Heart left ventricle (tissue), 16 donors: ENCODE measurements at regions of chr5 and their contacts with region 1.

Region 1: GRCh38 chr5:55706230-55706629 is 5.9 kb downstream of the SLC38A9 start:
- DNase-seq: no peak
- ATAC-seq: no peak
- H3K4me3 ChIP-seq: no peak overlapping the region
- H3K27ac ChIP-seq: no peak overlapping the region
- H3K4me1 ChIP-seq: peaks cover 0 to 11% (median 3%) of the 10 kb centered on the region in 12 donors
- H3K27me3 ChIP-seq: no peaks in the 10 kb centered on the region
- CTCF ChIP-seq: no peak
- POLR2A ChIP-seq: no peak

Region 2: DNA sequence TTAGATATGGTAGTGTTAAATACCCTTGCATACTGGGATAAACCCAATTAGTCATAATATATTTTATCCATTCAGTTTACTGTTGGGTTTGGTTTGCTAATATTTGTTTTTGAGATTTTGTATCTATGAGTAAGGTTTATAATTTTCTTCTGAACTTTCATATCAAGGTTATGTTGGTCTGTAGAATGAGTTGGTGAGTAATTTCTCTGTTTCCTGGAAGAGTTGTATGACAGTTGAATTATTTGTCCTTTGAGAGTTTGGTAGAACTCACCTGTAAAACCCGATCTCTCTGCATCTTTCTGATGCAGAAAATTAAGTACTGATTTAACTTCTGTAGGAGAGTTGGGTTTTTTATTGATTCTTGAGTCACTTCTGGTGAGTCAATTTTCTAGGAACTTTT is 52.0 kb after region 1 on chr5:
- intact Hi-C with region 1: loop called in 1 of 10 experiments (anchors 2 kb)
- DNase-seq: no peak
- ATAC-seq: no peak
- H3K4me3 ChIP-seq: no peak overlapping the region
- H3K27ac ChIP-seq: no peak overlapping the region
- H3K4me1 ChIP-seq: no peaks in the 10 kb centered on the region
- H3K27me3 ChIP-seq: peaks cover 0 to 6% (median 0%) of the 10 kb centered on the region in 9 donors
- CTCF ChIP-seq: no peak
- POLR2A ChIP-seq: no peak

Region 3: DNA sequence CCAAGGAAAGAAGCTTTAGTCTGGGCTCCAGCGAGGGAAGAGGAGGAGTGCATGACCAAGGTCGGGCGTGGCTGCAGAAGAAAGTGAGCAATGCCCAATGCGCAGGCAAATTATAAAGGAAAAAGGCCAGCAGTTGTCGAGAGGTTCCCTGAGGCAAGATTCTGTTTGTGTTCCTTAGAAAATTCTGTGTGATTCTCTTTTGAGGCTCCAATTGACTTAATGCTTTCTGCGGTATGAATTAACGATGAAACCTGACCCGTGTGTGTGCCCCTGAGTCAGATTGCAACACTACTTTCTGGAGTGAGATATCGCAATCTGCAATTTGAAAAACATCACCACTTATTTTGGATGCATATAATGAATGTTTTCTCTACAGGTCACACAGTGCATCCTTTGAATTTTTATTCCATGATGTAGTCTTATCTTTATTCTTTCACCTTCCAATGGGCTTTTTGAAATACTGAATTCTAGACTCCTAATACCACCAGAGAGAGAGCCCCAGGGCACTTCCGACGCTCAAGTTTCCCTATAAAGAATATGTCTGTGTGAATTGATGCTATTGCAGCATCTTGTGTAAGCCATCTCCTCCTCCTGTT is 406.4 kb after region 1 on chr5:
- intact Hi-C with region 1: no loop called
- DNase-seq: no peak
- ATAC-seq: no peak
- H3K4me3 ChIP-seq: no peak overlapping the region
- H3K27ac ChIP-seq: no peak overlapping the region
- H3K4me1 ChIP-seq: peaks cover 0 to 12% (median 0%) of the 10 kb centered on the region in 12 donors
- H3K27me3 ChIP-seq: no peaks in the 10 kb centered on the region
- CTCF ChIP-seq: no peak
- POLR2A ChIP-seq: no peak